Left ventricle myocardium inferior (tissue), 1 donor: ENCODE measurements at regions of chr7 and their contacts with region 1.

Region 1: GRCh38 chr7:151104411-151105235 is 18.3 kb downstream of the AGAP3 start:
- DNase-seq: no peak
- H3K4me3 ChIP-seq: no peak overlapping the region
- H3K27ac ChIP-seq: no peak overlapping the region
- H3K4me1 ChIP-seq: peaks cover 42% of the 10 kb centered on the region
- H3K27me3 ChIP-seq: no peaks in the 10 kb centered on the region
- CTCF ChIP-seq: no peak

Region 2: GRCh38 chr7:151038951-151039849 is 65.4 kb before region 1 on chr7:
- intact Hi-C with region 1: loop called (anchors 10 kb)
- DNase-seq: peak; percentile 59
- H3K4me3 ChIP-seq: no peak overlapping the region
- H3K27ac ChIP-seq: peak overlapping the region; percentile 60
- H3K4me1 ChIP-seq: peaks cover 35% of the 10 kb centered on the region
- H3K27me3 ChIP-seq: no peaks in the 10 kb centered on the region
- CTCF ChIP-seq: no peak